CD4-positive, alpha-beta T cell (primary cell): ENCODE measurements at regions of chr7 and their contacts with region 1.

Region 1: GRCh38 chr7:156969972-156970420 is 20.5 kb downstream of the NOM1 start:
- DNase-seq: peak in 2 of 14 experiments; percentile 17 to 22
- ATAC-seq: peak; percentile 46
- H3K4me3 ChIP-seq: no peak overlapping the region
- H3K4me3 Mint-ChIP-seq: no peak overlapping the region
- H3K27ac ChIP-seq: no peak overlapping the region
- H3K27ac Mint-ChIP-seq: no peak overlapping the region
- H3K4me1 ChIP-seq: no peaks in the 10 kb centered on the region
- H3K4me1 Mint-ChIP-seq: no peaks in the 10 kb centered on the region
- H3K27me3 ChIP-seq: no peaks in the 10 kb centered on the region
- H3K27me3 Mint-ChIP-seq: no peaks in the 10 kb centered on the region
- CTCF ChIP-seq: peak; percentile 49

Region 2: DNA sequence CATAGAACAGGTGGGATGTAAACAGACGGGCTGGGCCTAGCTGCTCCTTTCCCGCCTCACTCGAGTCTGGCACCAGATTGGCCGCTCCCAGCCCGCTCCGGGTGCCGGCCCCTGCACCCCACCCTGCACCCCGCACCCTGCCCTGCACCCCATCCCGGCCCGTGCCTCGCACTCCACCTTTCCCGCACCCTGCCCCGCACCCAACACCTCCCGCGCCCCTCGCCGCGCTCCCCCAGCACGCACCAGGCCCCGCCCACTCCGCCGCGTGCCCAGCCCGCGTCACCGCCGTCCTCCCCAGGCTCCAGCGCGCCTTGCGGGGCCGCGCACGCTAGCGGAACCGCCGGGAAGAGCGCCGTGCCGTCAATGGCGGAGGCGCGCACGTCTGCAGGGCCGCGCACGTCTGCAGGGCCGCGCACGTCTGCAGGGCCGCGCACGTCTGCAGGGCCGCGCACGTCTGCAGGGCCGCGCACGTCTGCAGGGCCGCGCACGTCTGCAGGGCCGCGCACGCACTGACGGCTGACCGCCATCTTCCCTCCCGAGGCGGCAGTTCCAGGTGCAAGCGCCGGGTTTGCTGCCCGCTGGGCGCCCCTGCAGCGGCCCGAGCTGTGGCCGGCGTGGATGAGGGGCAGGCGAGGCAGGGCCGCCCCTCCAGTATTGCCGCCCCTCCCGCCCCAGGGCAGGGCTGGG is 168.6 kb after region 1 on chr7 and contains the start of gene UBE3C:
- CTCF ChIA-PET with region 1: no interaction called
- POLR2A ChIA-PET with region 1: no interaction called
- intact Hi-C with region 1: loop called in 1 of 2 experiments (anchors 10 kb)
- DNase-seq: peak; percentile 79 to 97 (median 90)
- ATAC-seq: peak; percentile 81
- H3K4me3 ChIP-seq: peak within 1 kb of the TSS; percentile 78
- H3K4me3 Mint-ChIP-seq: peak within 1 kb of the TSS; percentile 92
- H3K27ac ChIP-seq: peak within 1 kb of the TSS; percentile 85 to 86
- H3K27ac Mint-ChIP-seq: peak within 1 kb of the TSS; percentile 98
- H3K4me1 ChIP-seq: peaks cover 44% of the 10 kb centered on the region
- H3K4me1 Mint-ChIP-seq: peaks cover 49% of the 10 kb centered on the region
- H3K27me3 ChIP-seq: no peaks in the 10 kb centered on the region
- H3K27me3 Mint-ChIP-seq: no peaks in the 10 kb centered on the region
- CTCF ChIP-seq: no peak
- total RNA-seq, gene UBE3C: 30.8 to 32.3 TPM

Region 3: GRCh38 chr7:157239571-157240270 is 269.7 kb after region 1 on chr7:
- CTCF ChIA-PET with region 1: no interaction called
- POLR2A ChIA-PET with region 1: no interaction called
- intact Hi-C with region 1: loop called in 1 of 2 experiments (anchors 10 kb)
- DNase-seq: no peak
- ATAC-seq: no peak
- H3K4me3 ChIP-seq: no peak overlapping the region
- H3K4me3 Mint-ChIP-seq: no peak overlapping the region
- H3K27ac ChIP-seq: no peak overlapping the region
- H3K27ac Mint-ChIP-seq: no peak overlapping the region
- H3K4me1 ChIP-seq: no peaks in the 10 kb centered on the region
- H3K4me1 Mint-ChIP-seq: no peaks in the 10 kb centered on the region
- H3K27me3 ChIP-seq: no peaks in the 10 kb centered on the region
- H3K27me3 Mint-ChIP-seq: no peaks in the 10 kb centered on the region
- CTCF ChIP-seq: no peak

Region 4: DNA sequence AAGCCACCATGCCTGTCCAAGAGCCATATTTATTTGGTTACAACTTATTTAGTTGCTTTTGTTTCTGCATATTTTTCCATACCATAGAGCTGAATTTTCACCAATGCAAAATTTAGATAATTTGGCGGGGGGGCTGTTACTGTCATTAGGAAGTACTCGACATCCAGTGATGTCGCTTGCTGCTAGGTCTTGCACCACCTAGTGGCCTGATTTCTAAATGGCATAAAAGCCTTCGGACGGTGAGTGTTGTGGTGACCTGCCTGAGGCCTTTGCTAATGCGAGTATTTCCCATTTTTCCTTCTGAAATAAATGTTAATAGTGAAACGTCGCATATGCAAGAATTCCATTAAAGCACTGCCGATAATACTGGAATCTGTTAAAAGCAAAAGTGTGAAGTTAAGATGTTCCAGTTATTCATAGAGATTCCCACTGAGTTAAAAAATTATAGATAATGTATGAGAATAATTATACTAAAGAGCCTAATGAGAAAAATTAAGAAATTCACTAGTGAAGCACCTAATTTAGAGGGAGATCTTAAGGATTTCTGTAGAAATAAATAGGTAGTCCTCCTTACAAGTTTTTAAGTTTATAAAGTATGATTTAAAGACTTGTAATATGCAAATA is 280.7 kb after region 1 on chr7:
- CTCF ChIA-PET with region 1: no interaction called
- POLR2A ChIA-PET with region 1: no interaction called
- intact Hi-C with region 1: loop called (anchors 1 to 10 kb)
- DNase-seq: peak in 12 of 14 experiments; percentile 14 to 78 (median 28)
- ATAC-seq: peak; percentile 72
- H3K4me3 ChIP-seq: no peak overlapping the region
- H3K4me3 Mint-ChIP-seq: no peak overlapping the region
- H3K27ac ChIP-seq: no peak overlapping the region
- H3K27ac Mint-ChIP-seq: no peak overlapping the region
- H3K4me1 ChIP-seq: no peaks in the 10 kb centered on the region
- H3K4me1 Mint-ChIP-seq: no peaks in the 10 kb centered on the region
- H3K27me3 ChIP-seq: no peaks in the 10 kb centered on the region
- H3K27me3 Mint-ChIP-seq: no peaks in the 10 kb centered on the region
- CTCF ChIP-seq: peak; percentile 91

Region 5: DNA sequence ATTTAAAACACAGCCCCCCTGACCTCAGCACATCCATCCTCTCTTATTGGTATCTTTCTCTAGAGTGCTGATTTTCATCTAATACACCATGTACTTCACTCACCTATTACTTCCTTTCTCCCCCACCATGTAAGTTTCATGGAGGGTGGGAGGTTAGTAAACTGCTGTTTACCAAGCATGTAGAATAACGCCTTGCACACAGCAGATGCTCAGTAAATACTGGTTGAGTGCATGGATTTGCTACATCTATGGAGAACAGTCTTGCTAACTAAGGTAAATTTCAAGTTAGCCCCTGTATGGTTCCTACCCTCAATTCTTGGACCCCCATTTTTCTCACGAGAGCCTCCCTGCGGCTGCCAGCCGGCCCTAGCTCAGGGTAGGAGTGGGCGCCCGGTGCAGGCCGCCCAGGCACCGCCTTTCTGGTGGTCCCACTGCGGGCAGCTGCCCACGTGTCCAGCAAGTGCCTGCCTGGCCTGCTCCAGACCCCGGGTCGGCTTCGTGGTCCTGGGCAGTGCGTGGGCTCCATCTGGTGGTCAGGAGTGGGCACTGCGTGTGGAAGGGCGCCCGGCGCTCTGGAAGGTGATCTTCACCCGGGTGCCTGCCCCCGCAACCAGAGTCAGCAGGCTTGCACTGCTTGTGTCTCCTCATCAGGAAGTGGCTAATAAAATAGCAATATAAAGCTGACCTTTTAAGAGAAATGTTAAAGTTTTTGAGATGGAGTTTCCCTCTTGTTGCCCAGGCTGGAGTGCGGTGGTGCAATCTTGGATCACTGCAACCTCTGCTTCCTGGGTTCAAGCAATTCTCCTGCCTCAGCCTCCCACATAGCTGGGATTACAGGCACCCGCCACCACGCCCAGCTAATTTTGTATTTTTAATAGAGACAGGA is 303.5 kb after region 1 on chr7:
- CTCF ChIA-PET with region 1: no interaction called
- POLR2A ChIA-PET with region 1: no interaction called
- intact Hi-C with region 1: loop called (anchors 2 to 5 kb)
- DNase-seq: peak; percentile 33 to 82 (median 52)
- ATAC-seq: peak; percentile 87
- H3K4me3 ChIP-seq: no peak overlapping the region
- H3K4me3 Mint-ChIP-seq: no peak overlapping the region
- H3K27ac ChIP-seq: no peak overlapping the region
- H3K27ac Mint-ChIP-seq: no peak overlapping the region
- H3K4me1 ChIP-seq: peaks cover 41% of the 10 kb centered on the region
- H3K4me1 Mint-ChIP-seq: peaks cover 20% of the 10 kb centered on the region
- H3K27me3 ChIP-seq: peaks cover 2 to 5% of the 10 kb centered on the region in 2 experiments
- H3K27me3 Mint-ChIP-seq: peaks cover 3% of the 10 kb centered on the region
- CTCF ChIP-seq: peak; percentile 95

Region 6: DNA sequence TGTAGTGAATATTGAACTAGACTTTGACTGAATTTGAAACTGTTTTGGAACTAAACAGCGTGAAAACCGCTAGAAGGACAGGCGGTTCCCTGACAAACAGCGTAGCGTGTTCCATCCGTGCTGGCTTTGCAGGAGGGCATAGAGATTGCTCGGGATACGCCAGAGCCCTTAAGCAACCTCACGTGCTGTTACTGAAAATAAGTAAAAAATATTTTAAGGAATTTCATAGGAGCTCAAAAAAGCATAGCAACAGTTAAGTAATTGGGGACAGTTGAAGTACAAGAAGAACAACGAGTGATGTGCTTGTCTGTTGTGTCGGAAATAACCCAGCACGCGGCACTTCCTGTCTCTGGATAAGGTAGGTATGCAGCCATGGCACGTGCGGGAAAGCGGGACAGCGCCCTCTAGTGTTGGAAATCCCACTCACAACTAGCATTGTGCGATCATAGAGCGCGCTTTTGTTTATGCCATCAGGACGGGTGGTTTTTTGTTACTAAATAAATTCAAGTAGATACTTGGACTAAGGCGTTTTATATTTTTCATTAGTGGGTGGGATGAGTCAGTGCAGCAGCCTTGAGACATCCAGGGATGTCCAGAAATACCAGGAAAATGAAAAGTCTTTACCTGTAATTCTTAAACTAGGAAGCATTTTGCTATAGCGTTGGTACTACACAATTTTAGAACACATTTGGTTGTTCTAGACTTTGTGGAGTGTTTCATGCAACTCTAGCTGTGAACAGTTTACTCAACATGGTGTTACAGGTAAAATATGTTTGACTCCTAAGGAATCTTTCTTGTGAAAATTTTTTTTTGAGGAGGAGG is 417.2 kb after region 1 on chr7:
- CTCF ChIA-PET with region 1: no interaction called
- POLR2A ChIA-PET with region 1: no interaction called
- intact Hi-C with region 1: loop called in 1 of 2 experiments (anchors 1 kb)
- DNase-seq: peak; percentile 78 to 94 (median 87)
- ATAC-seq: peak; percentile 95
- H3K4me3 ChIP-seq: no peak overlapping the region
- H3K4me3 Mint-ChIP-seq: peak overlapping the region; percentile 30
- H3K27ac ChIP-seq: peak overlapping the region; percentile 13 to 26
- H3K27ac Mint-ChIP-seq: peak overlapping the region; percentile 71
- H3K4me1 ChIP-seq: peaks cover 36% of the 10 kb centered on the region
- H3K4me1 Mint-ChIP-seq: peaks cover 46% of the 10 kb centered on the region
- H3K27me3 ChIP-seq: no peaks in the 10 kb centered on the region
- H3K27me3 Mint-ChIP-seq: no peaks in the 10 kb centered on the region
- CTCF ChIP-seq: peak; percentile 99